Heart left ventricle (tissue), 16 donors: ENCODE measurements at regions of chr6 and their contacts with region 1.

Region 1: DNA sequence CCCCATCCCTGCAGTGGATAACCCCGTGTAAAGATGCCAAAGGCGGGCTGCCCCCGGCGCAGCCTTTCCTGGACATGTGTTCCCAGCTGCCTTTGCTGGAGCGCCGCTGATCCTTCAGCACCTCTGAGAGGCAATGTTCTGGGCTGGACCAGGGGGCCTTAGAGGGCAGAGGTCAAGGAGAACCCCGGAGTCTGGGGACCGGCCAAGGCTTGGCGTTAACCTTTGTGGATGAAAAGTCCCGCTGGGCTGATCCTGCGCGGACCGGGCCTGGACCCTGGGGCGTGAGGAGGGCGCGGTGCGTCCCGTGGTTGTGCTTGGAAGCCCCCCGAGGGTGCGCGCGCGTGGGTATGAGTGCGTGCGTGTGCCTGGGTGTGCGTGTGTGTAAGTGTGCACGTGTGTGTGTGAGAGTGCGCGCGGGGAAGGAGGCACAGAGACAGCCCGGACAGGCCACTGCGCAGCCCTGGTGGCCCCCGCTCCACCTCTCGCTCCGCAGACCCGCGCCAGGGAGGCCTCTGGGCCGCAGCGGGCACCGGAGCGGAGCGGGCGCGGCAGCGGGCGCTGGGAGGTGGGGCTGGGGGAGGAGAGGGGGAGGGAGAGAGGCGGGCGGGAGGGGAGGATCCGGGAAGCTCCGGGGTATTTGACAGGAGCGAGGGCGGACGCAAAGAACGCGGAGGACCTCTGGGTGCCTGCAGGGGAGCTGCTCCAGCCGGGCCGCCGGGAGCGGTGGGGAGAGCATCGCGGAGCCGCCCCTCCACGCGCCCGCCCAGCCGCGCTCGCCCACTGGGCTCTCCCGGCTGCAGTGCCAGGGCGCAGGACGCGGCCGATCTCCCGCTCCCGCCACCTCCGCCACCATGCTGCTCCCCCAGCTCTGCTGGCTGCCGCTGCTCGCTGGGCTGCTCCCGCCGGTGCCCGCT is at the start of gene SMOC2:
- DNase-seq: peak in 4 of 5 donors; percentile 54 to 68 (median 60)
- ATAC-seq: peak; percentile 33 to 80 (median 71)
- H3K4me3 ChIP-seq: peak within 1 kb of the TSS; percentile 41 to 79 (median 60)
- H3K27ac ChIP-seq: peak within 1 kb of the TSS in 10 of 12 donors; percentile 22 to 84 (median 63)
- H3K4me1 ChIP-seq: peaks cover 0 to 22% (median 7%) of the 10 kb centered on the region in 12 donors
- H3K27me3 ChIP-seq: peaks cover 9 to 56% (median 29%) of the 10 kb centered on the region in 9 donors
- CTCF ChIP-seq: peak in 1 of 12 donors; percentile 6
- POLR2A ChIP-seq: no peak
- total RNA-seq, gene SMOC2: 7.6 to 44.2 (median 24.0) TPM

Region 2: GRCh38 chr6:168377484-168377855 is 63.3 kb before region 1 on chr6:
- intact Hi-C with region 1: loop called in 2 of 10 experiments (anchors 5 kb)
- DNase-seq: peak in 4 of 5 donors; percentile 63 to 83 (median 79)
- ATAC-seq: peak; percentile 67 to 91 (median 82)
- H3K4me3 ChIP-seq: peak overlapping the region in 4 of 12 donors; percentile 3 to 32 (median 8)
- H3K27ac ChIP-seq: peak overlapping the region in 11 of 12 donors; percentile 5 to 74 (median 46)
- H3K4me1 ChIP-seq: peaks cover 0 to 7% (median 0%) of the 10 kb centered on the region in 12 donors
- H3K27me3 ChIP-seq: peaks cover 0 to 7% (median 0%) of the 10 kb centered on the region in 9 donors
- CTCF ChIP-seq: no peak
- POLR2A ChIP-seq: no peak

Region 3: GRCh38 chr6:168648240-168649125 is 207.7 kb after region 1 on chr6:
- intact Hi-C with region 1: loop called in 1 of 10 experiments (anchors 10 kb)
- DNase-seq: peak in 1 of 5 donors; percentile 49
- ATAC-seq: peak in 3 of 4 donors; percentile 27 to 62 (median 52)
- H3K4me3 ChIP-seq: peak overlapping the region in 1 of 12 donors; percentile 8
- H3K27ac ChIP-seq: peak overlapping the region in 1 of 12 donors; percentile 19
- H3K4me1 ChIP-seq: peaks cover 0 to 14% (median 0%) of the 10 kb centered on the region in 12 donors
- H3K27me3 ChIP-seq: peaks cover 0 to 21% (median 0%) of the 10 kb centered on the region in 9 donors
- CTCF ChIP-seq: no peak
- POLR2A ChIP-seq: no peak